ENCODE measurements at regions of chr1 and their contacts with region 1.

Region 1: DNA sequence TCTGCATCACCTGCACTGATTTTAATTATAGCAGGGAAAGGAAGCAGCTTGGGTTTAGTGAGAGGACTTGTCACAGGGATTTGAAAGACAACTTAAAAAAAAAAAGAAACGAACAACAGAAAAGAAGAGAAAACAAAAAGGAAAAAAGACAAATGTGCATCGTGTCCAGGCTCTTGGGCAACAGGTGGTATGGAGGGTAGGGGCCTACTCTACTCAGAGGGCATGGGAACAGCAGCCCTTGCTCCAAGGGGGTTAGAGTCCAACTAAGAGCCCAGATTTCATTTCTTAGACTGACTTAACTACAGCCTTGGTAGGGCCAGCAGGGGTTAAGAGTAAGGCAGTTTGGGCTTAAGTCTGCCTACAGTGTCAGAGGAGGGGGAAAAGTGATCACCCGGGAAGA is 15.3 kb upstream of the EXOSC10 start:
- DNase-seq: no peak
- H3K4me3 ChIP-seq: no peak overlapping the region
- H3K27ac ChIP-seq: no peak overlapping the region
- H3K4me1 ChIP-seq: no peaks in the 10 kb centered on the region
- H3K27me3 ChIP-seq: no peaks in the 10 kb centered on the region
- CTCF ChIP-seq: no peak
- EP300 ChIP-seq: no peak
- POLR2A ChIP-seq: no peak

Region 2: GRCh38 chr1:11012250-11013171 is 102.5 kb before region 1 on chr1 and contains the start of gene TARDBP:
- intact Hi-C with region 1: no loop called
- DNase-seq: peak; percentile 97
- H3K4me3 ChIP-seq: peak within 1 kb of the TSS; percentile 71 to 97 (median 81)
- H3K27ac ChIP-seq: peak within 1 kb of the TSS; percentile 91 to 97 (median 94)
- H3K4me1 ChIP-seq: peaks cover 37 to 54% (median 51%) of the 10 kb centered on the region in 4 donors
- H3K27me3 ChIP-seq: no peaks in the 10 kb centered on the region
- CTCF ChIP-seq: no peak
- EP300 ChIP-seq: no peak
- POLR2A ChIP-seq: peak; percentile 94
- total RNA-seq, gene TARDBP: 74.9 to 184 (median 137) TPM

Region 3: DNA sequence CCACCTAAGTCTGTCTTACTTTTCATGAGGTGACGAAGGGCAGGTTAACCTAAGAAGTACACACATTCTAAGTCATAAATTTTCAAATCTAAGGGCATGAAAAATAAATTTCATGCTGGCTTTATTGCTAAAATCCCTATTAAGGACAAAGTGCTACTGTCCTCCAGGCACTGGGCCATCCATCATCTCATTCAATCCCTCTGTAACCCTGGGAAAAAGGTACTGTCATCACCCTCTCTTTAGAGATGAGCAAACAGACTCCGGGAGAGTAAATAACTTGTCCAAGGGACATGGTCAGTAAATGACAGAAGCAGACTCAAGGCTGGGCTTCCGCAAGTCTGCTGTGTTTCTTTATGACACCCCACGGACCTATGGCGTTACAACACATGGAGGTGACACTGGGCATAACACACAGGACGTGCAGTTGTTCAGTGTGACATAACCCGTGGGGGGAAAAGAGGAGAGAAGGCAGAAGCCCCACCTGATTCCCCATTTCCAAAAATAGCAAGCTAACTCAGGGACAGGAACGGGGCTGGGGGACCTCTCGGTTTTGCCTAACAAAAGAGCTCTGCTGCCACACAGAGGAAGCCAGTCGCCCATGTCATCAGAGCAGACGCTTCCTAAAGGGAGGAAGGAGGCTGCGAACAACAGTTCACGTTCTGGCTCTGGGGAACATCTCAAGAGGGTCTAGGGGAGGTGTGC is 42.6 kb before region 1 on chr1:
- intact Hi-C with region 1: no loop called
- DNase-seq: no peak
- H3K4me3 ChIP-seq: no peak overlapping the region
- H3K27ac ChIP-seq: no peak overlapping the region
- H3K4me1 ChIP-seq: no peaks in the 10 kb centered on the region
- H3K27me3 ChIP-seq: no peaks in the 10 kb centered on the region
- CTCF ChIP-seq: no peak
- EP300 ChIP-seq: no peak
- POLR2A ChIP-seq: no peak

Region 4: GRCh38 chr1:11168731-11169130 is 53.8 kb after region 1 on chr1:
- intact Hi-C with region 1: no loop called
- DNase-seq: no peak
- H3K4me3 ChIP-seq: no peak overlapping the region
- H3K27ac ChIP-seq: no peak overlapping the region
- H3K4me1 ChIP-seq: no peaks in the 10 kb centered on the region
- H3K27me3 ChIP-seq: no peaks in the 10 kb centered on the region
- CTCF ChIP-seq: no peak
- EP300 ChIP-seq: no peak
- POLR2A ChIP-seq: no peak

Region 5: DNA sequence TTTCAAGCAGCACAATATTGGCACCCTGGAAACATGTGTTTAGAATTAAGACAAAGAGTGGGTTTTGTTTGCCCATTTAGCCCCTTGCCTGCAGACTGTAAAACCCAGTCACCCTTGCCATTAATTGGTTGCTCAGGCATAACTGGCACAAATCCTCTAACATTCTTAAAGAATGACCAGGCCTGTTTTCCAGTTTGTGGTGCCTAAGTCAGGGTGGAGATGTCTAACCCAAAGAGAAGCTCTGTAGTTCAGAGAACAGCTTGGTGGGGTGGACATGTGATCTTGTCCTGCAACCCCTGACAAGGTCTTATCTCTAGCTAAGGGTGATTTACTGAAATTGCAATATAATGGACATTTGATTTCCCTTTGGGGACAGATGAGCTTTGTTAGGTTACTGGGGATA is 65.4 kb after region 1 on chr1:
- intact Hi-C with region 1: loop called (anchors 10 kb)
- DNase-seq: no peak
- H3K4me3 ChIP-seq: no peak overlapping the region
- H3K27ac ChIP-seq: no peak overlapping the region
- H3K4me1 ChIP-seq: peaks cover 21 to 33% (median 25%) of the 10 kb centered on the region in 4 donors
- H3K27me3 ChIP-seq: no peaks in the 10 kb centered on the region
- CTCF ChIP-seq: no peak
- EP300 ChIP-seq: no peak
- POLR2A ChIP-seq: no peak

Measured in esophagus muscularis mucosa (tissue), 4 donors.